ENCODE measurements at regions of chr5 and their contacts with region 1.

Region 1: GRCh38 chr5:81851481-81852178 is 100.7 kb upstream of the SSBP2 start:
- DNase-seq: peak; percentile 88
- H3K4me3 Mint-ChIP-seq: peak overlapping the region; percentile 85
- H3K27ac Mint-ChIP-seq: peak overlapping the region; percentile 94
- H3K4me1 Mint-ChIP-seq: peaks cover 38% of the 10 kb centered on the region
- H3K27me3 Mint-ChIP-seq: no peaks in the 10 kb centered on the region

Region 2: DNA sequence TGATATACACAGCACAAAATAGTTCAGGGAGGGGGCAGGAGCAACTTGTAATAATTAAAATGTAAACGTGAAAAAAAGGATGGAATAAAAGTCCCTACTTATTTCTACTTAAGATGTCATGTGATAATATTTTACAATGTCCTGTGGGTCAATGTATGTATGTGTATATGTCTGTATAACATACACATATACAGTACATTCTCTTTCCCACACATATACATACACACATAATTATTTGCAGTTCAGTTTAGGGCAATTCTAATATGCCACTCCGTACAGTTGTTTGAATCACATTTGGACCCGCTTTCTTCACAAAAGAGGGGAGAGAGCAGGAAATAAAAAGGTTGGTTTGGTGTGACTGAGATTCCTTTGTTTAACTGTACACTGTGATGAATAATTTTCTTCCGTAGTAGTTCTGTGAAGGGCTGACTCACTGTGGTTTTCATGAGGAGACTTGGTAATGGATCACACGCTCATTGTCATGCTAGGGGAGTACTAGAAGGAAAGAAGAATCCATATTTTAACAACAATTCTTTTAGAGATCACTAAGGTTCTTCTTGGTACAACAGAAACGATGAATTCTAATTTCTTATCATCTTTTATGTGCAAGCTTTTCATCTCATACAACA is 431.5 kb before region 1 on chr5:
- intact Hi-C with region 1: loop called (anchors 5 kb)
- DNase-seq: no peak
- H3K4me3 Mint-ChIP-seq: no peak overlapping the region
- H3K27ac Mint-ChIP-seq: peak overlapping the region; percentile 83
- H3K4me1 Mint-ChIP-seq: peaks cover 35% of the 10 kb centered on the region
- H3K27me3 Mint-ChIP-seq: no peaks in the 10 kb centered on the region

Region 3: GRCh38 chr5:82278095-82278918 is 426.7 kb after region 1 on chr5 and contains the start of gene RPS23:
- intact Hi-C with region 1: loop called (anchors 2 kb)
- DNase-seq: peak; percentile 82
- H3K4me3 Mint-ChIP-seq: peak within 1 kb of the TSS; percentile 92
- H3K27ac Mint-ChIP-seq: peak within 1 kb of the TSS; percentile 97
- H3K4me1 Mint-ChIP-seq: peaks cover 35% of the 10 kb centered on the region
- H3K27me3 Mint-ChIP-seq: no peaks in the 10 kb centered on the region
- total RNA-seq, gene RPS23: 2,718 and 2,741 TPM in 2 replicates

Measured in activated T-helper 2 cell treated with anti-CD3 and anti-CD28 coated beads, Interferon-gamma antibody, Interleukin-2, Interleukin-4, amounts not matched to agents 10 μg/mL and 5 μg/mL and 100 μg/mL, durations not matched to agents 14 hours and 24 hours and 36 hours (primary cell).